CD8-positive, alpha-beta memory T cell (primary cell): ENCODE measurements at regions of chr3 and their contacts with region 1.

Region 1: GRCh38 chr3:141487521-141488252 is 860 bp downstream of the RASA2 start:
- DNase-seq: peak; percentile 82 to 93 (median 89)
- H3K4me3 ChIP-seq: peak overlapping the region; percentile 66
- H3K4me3 Mint-ChIP-seq: peak overlapping the region; percentile 88 to 95 (median 93)
- H3K27ac ChIP-seq: peak overlapping the region; percentile 78
- H3K27ac Mint-ChIP-seq: peak overlapping the region; percentile 88 to 99 (median 96)
- H3K4me1 ChIP-seq: peaks cover 68% of the 10 kb centered on the region
- H3K4me1 Mint-ChIP-seq: peaks cover 63 to 80% (median 74%) of the 10 kb centered on the region in 3 donors
- H3K27me3 ChIP-seq: no peaks in the 10 kb centered on the region
- H3K27me3 Mint-ChIP-seq: peaks cover 0 to 3% of the 10 kb centered on the region in 2 donors

Region 2: DNA sequence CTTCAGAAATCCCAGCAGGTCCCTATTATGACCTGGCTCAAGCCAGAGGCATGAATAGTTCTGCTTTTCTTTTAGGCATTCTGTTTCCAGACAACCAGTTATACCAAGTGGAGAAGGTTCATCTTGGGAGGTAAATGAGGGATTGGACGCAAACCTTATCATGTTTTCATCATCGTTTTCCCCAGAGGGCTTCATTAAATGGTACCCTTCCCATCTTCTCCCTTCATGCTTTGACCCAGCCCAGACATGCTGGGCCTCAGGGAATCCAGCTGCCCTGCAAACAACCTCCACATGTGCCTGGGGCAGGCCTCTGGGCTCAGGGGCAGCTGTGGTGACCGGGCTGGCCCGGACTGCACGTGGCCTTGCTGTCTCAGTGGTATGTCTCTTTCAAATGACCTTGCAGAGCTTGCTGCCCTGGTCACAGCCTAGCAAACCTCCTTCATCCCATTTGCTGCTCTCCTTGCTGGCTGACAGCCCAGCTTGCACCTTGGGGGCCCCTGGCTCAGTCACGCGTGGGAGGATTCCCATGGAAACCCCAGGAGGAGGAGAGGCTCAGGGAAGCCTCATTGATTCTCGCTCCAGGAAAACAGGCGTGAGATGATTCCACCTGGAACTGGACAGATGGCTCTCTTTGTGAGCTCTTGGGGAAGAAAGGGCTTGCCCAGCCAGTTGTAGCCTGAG is 431.1 kb before region 1 on chr3:
- CTCF ChIA-PET with region 1: no interaction called
- POLR2A ChIA-PET with region 1: no interaction called
- DNase-seq: no peak
- H3K4me3 ChIP-seq: no peak overlapping the region
- H3K4me3 Mint-ChIP-seq: no peak overlapping the region
- H3K27ac ChIP-seq: no peak overlapping the region
- H3K27ac Mint-ChIP-seq: no peak overlapping the region
- H3K4me1 ChIP-seq: no peaks in the 10 kb centered on the region
- H3K4me1 Mint-ChIP-seq: peaks cover 5 to 8% (median 6%) of the 10 kb centered on the region in 3 donors
- H3K27me3 ChIP-seq: no peaks in the 10 kb centered on the region
- H3K27me3 Mint-ChIP-seq: peaks cover 14 to 35% of the 10 kb centered on the region in 2 donors

Region 3: DNA sequence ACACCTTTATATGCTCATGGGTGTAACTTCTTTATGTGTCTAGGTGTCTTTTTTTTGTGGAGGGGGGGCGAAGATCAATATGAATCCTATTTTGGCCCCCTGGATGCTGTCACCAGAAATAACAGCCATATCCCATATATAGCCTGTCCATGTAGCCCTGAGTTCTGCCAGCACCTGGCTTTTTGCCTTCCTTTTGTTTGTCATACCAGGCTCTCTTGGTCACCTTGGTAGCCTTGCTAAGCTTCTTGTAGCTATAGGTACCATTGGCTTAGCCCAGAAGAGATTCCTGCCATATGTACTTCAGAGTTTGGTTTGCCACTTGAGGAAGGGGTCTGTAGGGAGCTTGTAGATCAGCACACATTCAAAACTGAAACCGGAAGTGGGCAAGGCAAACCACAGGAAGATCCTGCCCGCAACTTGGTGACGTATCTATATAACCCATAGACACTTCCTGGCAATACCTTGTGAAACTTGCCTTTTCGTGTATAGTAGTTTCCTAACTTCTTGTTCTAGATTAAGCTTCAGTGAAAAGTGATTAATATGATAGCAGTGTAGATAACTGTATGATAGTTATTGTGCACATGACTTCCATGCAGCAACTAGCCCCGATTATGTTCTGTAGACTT is 11.0 kb after region 1 on chr3:
- CTCF ChIA-PET with region 1: interaction called, 12 read pairs
- POLR2A ChIA-PET with region 1: interaction called, 70 read pairs
- DNase-seq: peak; percentile 69 to 94 (median 93)
- H3K4me3 ChIP-seq: peak overlapping the region; percentile 70
- H3K4me3 Mint-ChIP-seq: peak overlapping the region; percentile 73 to 85 (median 83)
- H3K27ac ChIP-seq: peak overlapping the region; percentile 71
- H3K27ac Mint-ChIP-seq: peak overlapping the region; percentile 90 to 98 (median 97)
- H3K4me1 ChIP-seq: peaks cover 84% of the 10 kb centered on the region
- H3K4me1 Mint-ChIP-seq: peaks cover 62 to 75% (median 74%) of the 10 kb centered on the region in 3 donors
- H3K27me3 ChIP-seq: no peaks in the 10 kb centered on the region
- H3K27me3 Mint-ChIP-seq: no peaks in the 10 kb centered on the region

Region 4: DNA sequence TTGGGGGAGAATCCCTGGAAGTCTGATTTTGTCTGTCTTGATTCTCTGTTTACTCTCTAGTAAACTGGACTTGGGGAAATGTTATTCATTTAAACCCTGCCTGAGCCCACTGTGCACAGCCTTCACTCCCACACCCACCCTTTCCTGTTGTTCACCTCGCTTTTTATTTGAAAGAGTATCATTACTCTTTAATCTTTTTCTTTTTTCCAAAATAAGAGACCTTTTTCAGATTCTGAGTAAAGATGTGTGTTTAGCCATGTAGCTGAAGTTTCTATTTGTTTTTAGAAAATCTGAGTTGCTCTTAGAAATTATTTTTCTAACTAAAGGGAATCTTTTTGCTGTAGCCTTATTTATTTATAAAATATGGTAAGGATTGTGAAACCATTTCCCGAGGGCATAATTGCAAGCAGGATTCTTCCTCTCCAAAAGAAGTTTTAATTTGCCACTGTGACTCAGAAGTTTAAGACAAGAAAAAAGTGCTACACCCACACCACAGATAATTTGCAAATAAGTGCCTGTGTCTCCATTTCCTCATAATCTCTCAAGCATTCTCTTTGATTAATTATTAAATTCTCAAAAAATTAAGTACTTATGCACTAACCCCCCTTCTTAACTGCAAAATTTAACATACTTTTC is 42.6 kb after region 1 on chr3:
- CTCF ChIA-PET with region 1: interaction called, 4 read pairs
- POLR2A ChIA-PET with region 1: interaction called, 13 read pairs
- DNase-seq: peak in 2 of 5 donors; percentile 32 to 66
- H3K4me3 ChIP-seq: peak overlapping the region; percentile 13
- H3K4me3 Mint-ChIP-seq: peak overlapping the region; percentile 27 to 83 (median 67)
- H3K27ac ChIP-seq: peak overlapping the region; percentile 6
- H3K27ac Mint-ChIP-seq: peak overlapping the region; percentile 43 to 94 (median 86)
- H3K4me1 ChIP-seq: peaks cover 78% of the 10 kb centered on the region
- H3K4me1 Mint-ChIP-seq: peaks cover 67 to 79% (median 79%) of the 10 kb centered on the region in 3 donors
- H3K27me3 ChIP-seq: no peaks in the 10 kb centered on the region
- H3K27me3 Mint-ChIP-seq: no peaks in the 10 kb centered on the region

Region 5: DNA sequence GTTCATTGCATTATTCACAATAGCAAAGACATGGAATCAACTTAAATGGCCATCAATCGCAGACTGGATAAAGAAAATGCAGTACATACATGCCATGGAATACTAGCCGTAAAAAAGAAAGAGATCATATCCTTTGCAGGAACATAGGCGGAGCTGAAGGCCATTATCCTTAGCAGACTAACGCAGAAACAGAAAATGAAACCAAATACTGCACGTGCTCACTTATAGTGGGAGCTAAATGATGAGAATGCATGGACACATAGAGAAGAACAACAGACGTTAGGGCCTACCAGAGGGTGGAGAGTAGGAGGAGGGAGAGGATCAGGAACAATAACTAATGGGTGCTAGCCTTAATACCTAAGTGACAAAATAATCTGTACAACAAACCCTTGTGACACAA is 57.0 kb after region 1 on chr3:
- CTCF ChIA-PET with region 1: interaction called, 4 read pairs
- POLR2A ChIA-PET with region 1: interaction called, 11 read pairs
- DNase-seq: peak in 2 of 5 donors; percentile 41 to 44
- H3K4me3 ChIP-seq: peak overlapping the region; percentile 23
- H3K4me3 Mint-ChIP-seq: peak overlapping the region in 6 of 7 donors; percentile 60 to 89 (median 64)
- H3K27ac ChIP-seq: no peak overlapping the region
- H3K27ac Mint-ChIP-seq: peak overlapping the region; percentile 66 to 99 (median 84)
- H3K4me1 ChIP-seq: peaks cover 28% of the 10 kb centered on the region
- H3K4me1 Mint-ChIP-seq: peaks cover 74 to 92% (median 85%) of the 10 kb centered on the region in 3 donors
- H3K27me3 ChIP-seq: no peaks in the 10 kb centered on the region
- H3K27me3 Mint-ChIP-seq: no peaks in the 10 kb centered on the region

Region 6: GRCh38 chr3:141553055-141553454 is 65.4 kb after region 1 on chr3:
- CTCF ChIA-PET with region 1: interaction called, 3 read pairs
- POLR2A ChIA-PET with region 1: interaction called, 21 read pairs
- DNase-seq: peak in 2 of 5 donors; percentile 74 to 77
- H3K4me3 ChIP-seq: no peak overlapping the region
- H3K4me3 Mint-ChIP-seq: peak overlapping the region in 6 of 7 donors; percentile 15 to 74 (median 56)
- H3K27ac ChIP-seq: no peak overlapping the region
- H3K27ac Mint-ChIP-seq: peak overlapping the region in 7 of 8 donors; percentile 51 to 95 (median 86)
- H3K4me1 ChIP-seq: peaks cover 71% of the 10 kb centered on the region
- H3K4me1 Mint-ChIP-seq: peaks cover 50 to 77% (median 67%) of the 10 kb centered on the region in 3 donors
- H3K27me3 ChIP-seq: no peaks in the 10 kb centered on the region
- H3K27me3 Mint-ChIP-seq: no peaks in the 10 kb centered on the region